Calu3 (cell line): ENCODE measurements at regions of chr20 and their contacts with region 1.

Region 1: GRCh38 chr20:51326201-51326819 is 216.2 kb downstream of the NFATC2 start:
- DNase-seq: peak; percentile 66
- H3K4me3 Mint-ChIP-seq: no peak overlapping the region
- H3K27ac Mint-ChIP-seq: no peak overlapping the region
- H3K4me1 Mint-ChIP-seq: no peaks in the 10 kb centered on the region
- H3K27me3 Mint-ChIP-seq: peaks cover 82% of the 10 kb centered on the region
- CTCF ChIP-seq: peak; percentile 79

Region 2: GRCh38 chr20:50980851-50981713 is 345.2 kb before region 1 on chr20:
- CTCF ChIA-PET with region 1: interaction called, 121 read pairs
- intact Hi-C with region 1: no loop called
- DNase-seq: peak; percentile 88
- H3K4me3 Mint-ChIP-seq: peak overlapping the region; percentile 6
- H3K27ac Mint-ChIP-seq: peak overlapping the region; percentile 67
- H3K4me1 Mint-ChIP-seq: peaks cover 40% of the 10 kb centered on the region
- H3K27me3 Mint-ChIP-seq: peaks cover 67% of the 10 kb centered on the region
- CTCF ChIP-seq: peak; percentile 95

Region 3: DNA sequence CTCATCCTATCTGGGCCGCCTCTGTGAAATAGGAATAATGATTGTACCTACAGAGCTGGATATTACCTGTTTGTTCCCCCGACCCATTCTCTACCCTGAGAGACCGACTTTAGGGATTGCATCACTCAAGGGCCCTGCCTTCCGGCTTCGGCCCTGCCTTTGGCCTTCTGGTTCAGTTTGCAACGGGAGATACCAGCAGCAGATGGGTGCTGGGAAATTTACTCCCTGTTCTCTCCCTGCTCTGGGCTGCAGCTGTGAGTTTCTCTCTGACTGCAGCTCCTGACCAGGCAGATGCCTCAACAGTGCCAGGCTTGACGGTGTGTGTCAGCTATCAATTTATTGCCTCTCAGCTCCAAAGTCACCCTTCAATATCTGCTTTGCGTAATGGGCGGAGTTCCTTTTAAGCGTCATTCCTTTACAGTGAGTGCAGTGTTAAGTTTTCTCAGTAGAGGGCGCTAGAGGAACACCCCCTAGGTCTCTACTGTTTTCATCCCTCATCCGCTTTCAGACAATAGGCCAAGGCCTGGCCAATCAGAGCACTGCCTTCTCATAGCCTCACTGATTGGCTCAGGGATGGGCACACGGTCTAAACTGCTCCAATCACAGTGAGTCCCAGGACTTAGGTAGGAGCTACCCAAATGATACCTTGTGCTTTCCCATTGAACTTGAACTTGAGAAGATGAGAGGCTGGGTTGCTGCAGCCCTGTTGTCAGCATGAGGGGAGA is 333.4 kb before region 1 on chr20:
- CTCF ChIA-PET with region 1: interaction called, 121 read pairs
- intact Hi-C with region 1: no loop called
- DNase-seq: peak; percentile 75
- H3K4me3 Mint-ChIP-seq: no peak overlapping the region
- H3K27ac Mint-ChIP-seq: no peak overlapping the region
- H3K4me1 Mint-ChIP-seq: peaks cover 10% of the 10 kb centered on the region
- H3K27me3 Mint-ChIP-seq: peaks cover 72% of the 10 kb centered on the region
- CTCF ChIP-seq: peak; percentile 86

Region 4: DNA sequence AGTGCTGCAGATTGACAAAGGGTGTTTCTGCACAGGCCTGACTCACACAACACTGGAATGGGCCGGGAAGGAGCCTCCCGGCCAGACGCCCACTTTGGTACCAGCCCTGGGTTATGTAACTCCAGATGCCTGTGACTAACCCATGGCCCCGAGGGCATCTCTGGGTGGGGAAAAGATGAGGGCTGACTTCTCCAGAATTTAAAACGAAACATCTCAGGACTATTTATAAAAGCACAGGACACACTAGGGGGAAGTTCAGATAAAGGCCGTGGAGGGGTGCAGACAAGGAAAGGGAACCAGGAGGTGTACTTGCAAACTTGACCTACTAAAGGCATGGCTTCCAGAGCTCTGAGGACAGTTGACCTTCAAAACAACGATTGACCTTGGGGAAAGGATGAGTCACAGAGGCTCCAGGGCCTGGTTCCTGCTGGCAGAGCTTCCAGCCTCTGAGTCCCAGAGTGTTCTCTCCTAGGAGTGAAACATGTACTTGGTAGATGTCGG is 19.3 kb after region 1 on chr20:
- CTCF ChIA-PET with region 1: no interaction called
- intact Hi-C with region 1: loop called (anchors 1 kb)
- DNase-seq: no peak
- H3K4me3 Mint-ChIP-seq: no peak overlapping the region
- H3K27ac Mint-ChIP-seq: no peak overlapping the region
- H3K4me1 Mint-ChIP-seq: no peaks in the 10 kb centered on the region
- H3K27me3 Mint-ChIP-seq: peaks cover 92% of the 10 kb centered on the region
- CTCF ChIP-seq: no peak